Heart left ventricle (tissue), 16 donors: ENCODE measurements at regions of chr7 and their contacts with region 1.

Region 1: DNA sequence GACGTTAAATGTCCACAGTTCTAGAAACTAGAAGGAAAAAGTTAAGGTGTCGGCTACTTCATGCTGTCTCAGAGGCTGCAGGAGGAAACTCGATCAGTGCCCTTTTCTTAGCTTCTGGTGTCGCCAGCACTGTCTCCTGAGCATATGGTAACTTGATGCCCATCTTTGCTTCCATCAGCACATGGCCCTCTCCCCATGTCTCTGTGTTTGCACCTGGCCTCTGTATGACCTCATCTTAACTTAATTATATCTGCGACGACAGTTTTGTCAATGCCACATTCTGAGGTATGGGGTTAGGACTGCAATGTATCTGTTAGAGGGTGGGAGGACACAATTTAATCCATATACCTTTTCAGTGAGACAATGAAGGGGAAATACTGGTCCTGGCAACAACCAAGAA is 449.9 kb downstream of the POM121L12 start:
- DNase-seq: no peak
- ATAC-seq: no peak
- H3K4me3 ChIP-seq: no peak overlapping the region
- H3K27ac ChIP-seq: no peak overlapping the region
- H3K4me1 ChIP-seq: no peaks in the 10 kb centered on the region
- H3K27me3 ChIP-seq: no peaks in the 10 kb centered on the region
- CTCF ChIP-seq: no peak
- POLR2A ChIP-seq: no peak

Region 2: GRCh38 chr7:53340220-53340619 is 145.1 kb before region 1 on chr7:
- intact Hi-C with region 1: no loop called
- DNase-seq: no peak
- ATAC-seq: no peak
- H3K4me3 ChIP-seq: no peak overlapping the region
- H3K27ac ChIP-seq: no peak overlapping the region
- H3K4me1 ChIP-seq: no peaks in the 10 kb centered on the region
- H3K27me3 ChIP-seq: no peaks in the 10 kb centered on the region
- CTCF ChIP-seq: no peak
- POLR2A ChIP-seq: no peak

Region 3: DNA sequence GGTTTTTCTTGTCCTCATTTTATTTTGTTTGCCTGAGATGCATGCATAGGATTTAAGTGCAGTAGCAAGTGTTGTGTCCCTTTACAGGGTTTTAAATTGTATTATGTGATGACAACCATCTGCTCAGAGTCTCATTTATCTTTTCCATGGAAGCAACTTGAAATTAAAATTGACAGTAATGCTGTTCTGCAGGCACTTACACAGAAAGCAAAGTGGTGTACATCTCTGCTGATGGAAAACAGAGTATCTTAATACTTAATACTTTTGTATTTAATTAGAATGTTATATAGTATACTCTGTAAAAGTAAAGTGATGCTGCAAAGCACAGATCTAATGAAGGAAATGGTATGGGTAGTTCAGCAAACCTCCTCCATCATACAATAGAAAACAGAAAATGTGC is 33.0 kb after region 1 on chr7:
- intact Hi-C with region 1: loop called in 2 of 10 experiments (anchors 1 to 2 kb)
- DNase-seq: no peak
- ATAC-seq: no peak
- H3K4me3 ChIP-seq: no peak overlapping the region
- H3K27ac ChIP-seq: no peak overlapping the region
- H3K4me1 ChIP-seq: no peaks in the 10 kb centered on the region
- H3K27me3 ChIP-seq: no peaks in the 10 kb centered on the region
- CTCF ChIP-seq: no peak
- POLR2A ChIP-seq: no peak